Mammary epithelial cell (primary cell): ENCODE measurements at regions of chr20 and their contacts with region 1.

Region 1: DNA sequence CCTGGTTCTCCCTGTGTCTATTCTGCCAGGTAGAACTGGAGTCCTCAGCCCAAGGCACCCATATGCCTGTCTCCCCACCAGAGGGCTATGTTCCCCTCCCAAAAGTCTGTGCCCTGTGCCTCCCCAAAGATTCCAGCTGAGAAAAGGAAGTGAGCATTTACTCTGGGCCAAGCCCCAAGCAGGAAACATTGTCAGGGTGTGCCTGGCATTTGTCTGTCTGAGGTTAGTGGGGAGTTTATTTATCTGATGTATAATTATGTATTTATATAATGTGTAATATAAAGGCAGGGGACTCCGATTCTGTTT is 5.6 kb downstream of the GDF5 start:
- DNase-seq: no peak
- H3K4me3 ChIP-seq: no peak overlapping the region
- H3K27ac ChIP-seq: no peak overlapping the region
- H3K4me1 ChIP-seq: peaks cover 2% of the 10 kb centered on the region
- H3K27me3 ChIP-seq: no peaks in the 10 kb centered on the region
- CTCF ChIP-seq: peak in 1 of 2 donors; percentile 1

Region 2: GRCh38 chr20:35207950-35208611 is 224.3 kb before region 1 on chr20:
- CTCF ChIA-PET with region 1: no interaction called
- dilution Hi-C with region 1: no loop called
- in situ Hi-C with region 1: no loop called
- intact Hi-C with region 1: loop called (anchors 5 kb)
- DNase-seq: peak; percentile 63
- H3K4me3 ChIP-seq: peak overlapping the region in 1 of 3 experiments; percentile 9
- H3K27ac ChIP-seq: no peak overlapping the region
- H3K4me1 ChIP-seq: peaks cover 6% of the 10 kb centered on the region
- H3K27me3 ChIP-seq: no peaks in the 10 kb centered on the region
- CTCF ChIP-seq: peak; percentile 78 to 86

Region 3: DNA sequence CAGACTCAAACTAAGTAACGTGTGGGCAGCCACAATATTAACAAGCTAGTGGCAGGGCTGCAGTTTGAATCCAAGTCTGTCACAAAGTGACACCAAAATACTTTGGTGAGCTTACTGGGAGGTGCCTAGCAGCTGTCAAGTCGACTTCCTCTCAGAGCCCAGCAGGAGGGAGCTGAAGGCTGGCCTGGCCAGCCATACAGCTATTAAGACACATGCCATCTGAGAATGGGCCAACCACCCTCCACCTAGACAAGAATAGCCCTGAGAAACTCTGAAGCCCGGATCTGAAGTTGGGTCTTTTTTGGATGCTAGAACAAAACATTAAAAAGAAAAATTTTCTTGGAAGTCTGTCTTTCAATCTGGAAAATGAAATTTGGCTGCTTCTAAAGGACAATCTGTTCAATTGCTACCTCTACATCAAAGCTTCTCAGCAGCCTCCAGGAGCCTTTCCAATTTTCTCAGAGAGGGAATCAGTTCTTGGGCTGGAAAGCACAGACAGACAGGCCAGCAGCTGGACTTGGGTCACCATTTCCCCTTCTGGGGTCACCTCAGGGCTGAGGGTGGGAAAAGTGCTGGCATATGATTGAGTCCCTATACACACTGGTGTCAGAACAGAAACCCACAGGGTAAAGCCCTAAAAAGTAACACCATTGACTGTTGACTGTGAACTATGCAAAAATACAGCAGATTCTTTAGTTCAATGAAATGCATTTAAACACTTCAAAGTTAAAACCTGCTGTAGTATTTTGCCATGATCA is 63.5 kb before region 1 on chr20:
- CTCF ChIA-PET with region 1: no interaction called
- dilution Hi-C with region 1: loop called (anchors 5 kb)
- in situ Hi-C with region 1: no loop called
- intact Hi-C with region 1: no loop called
- DNase-seq: no peak
- H3K4me3 ChIP-seq: no peak overlapping the region
- H3K27ac ChIP-seq: no peak overlapping the region
- H3K4me1 ChIP-seq: no peaks in the 10 kb centered on the region
- H3K27me3 ChIP-seq: no peaks in the 10 kb centered on the region
- CTCF ChIP-seq: no peak

Region 4: GRCh38 chr20:35447082-35447789 is 14.9 kb after region 1 on chr20:
- CTCF ChIA-PET with region 1: interaction called, 13 read pairs
- dilution Hi-C with region 1: no loop called
- in situ Hi-C with region 1: no loop called
- intact Hi-C with region 1: no loop called
- DNase-seq: peak; percentile 71
- H3K4me3 ChIP-seq: no peak overlapping the region
- H3K27ac ChIP-seq: no peak overlapping the region
- H3K4me1 ChIP-seq: peaks cover 26% of the 10 kb centered on the region
- H3K27me3 ChIP-seq: no peaks in the 10 kb centered on the region
- CTCF ChIP-seq: peak; percentile 89 to 97